Breast epithelium (tissue), 4 donors: ENCODE measurements at regions of chr14 and their contacts with region 1.

Region 1: GRCh38 chr14:80850197-80850814 is 91.2 kb downstream of the CEP128 start:
- DNase-seq: no peak
- H3K4me3 ChIP-seq: no peak overlapping the region
- H3K27ac ChIP-seq: no peak overlapping the region
- H3K4me1 ChIP-seq: no peaks in the 10 kb centered on the region
- H3K27me3 ChIP-seq: no peaks in the 10 kb centered on the region
- CTCF ChIP-seq: peak; percentile 48 to 59 (median 54)
- POLR2A ChIP-seq: no peak

Region 2: DNA sequence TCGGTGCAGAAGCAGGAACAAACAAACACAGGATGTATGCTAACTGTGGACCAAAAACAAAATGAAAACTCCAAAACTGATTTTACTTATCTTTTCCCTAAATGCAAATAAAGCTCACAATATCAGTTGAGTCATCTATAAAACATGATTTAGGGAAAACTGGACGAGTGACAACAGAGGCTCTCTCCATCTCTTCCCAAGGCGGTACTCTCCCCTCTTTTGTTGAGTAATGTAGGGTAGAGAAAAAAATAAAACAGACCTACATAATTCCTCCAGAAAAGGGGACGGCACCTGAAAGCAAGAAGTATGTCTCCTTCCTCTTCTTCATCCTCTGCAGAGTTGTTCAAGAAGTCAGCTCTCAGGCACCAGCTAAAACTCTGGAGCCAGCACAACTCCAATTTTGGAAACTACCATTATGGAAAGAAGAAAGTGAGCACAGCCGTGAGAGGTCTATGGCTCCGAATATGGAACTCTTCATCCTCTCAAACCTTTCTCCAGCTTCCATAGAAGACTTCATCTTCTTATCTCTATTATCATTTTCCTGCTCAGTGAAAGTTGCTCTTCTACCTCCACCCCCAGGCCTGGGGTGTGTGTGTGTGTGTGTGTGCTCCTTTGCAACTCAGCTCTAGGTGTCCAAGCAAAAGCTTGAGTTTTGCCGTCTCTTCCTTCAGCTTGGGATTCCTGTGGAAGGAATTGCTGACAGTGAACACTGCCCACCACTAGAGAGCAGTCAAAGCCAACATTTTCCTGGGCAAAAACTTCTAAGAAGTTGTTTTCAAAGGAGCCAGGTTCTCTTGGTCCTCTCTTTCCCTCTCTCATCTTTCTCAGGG is 794.4 kb before region 1 on chr14:
- intact Hi-C with region 1: loop called (anchors 5 kb)
- DNase-seq: peak in 1 of 2 donors; percentile 20
- H3K4me3 ChIP-seq: no peak overlapping the region
- H3K27ac ChIP-seq: no peak overlapping the region
- H3K4me1 ChIP-seq: no peaks in the 10 kb centered on the region
- H3K27me3 ChIP-seq: no peaks in the 10 kb centered on the region
- CTCF ChIP-seq: peak; percentile 35 to 67 (median 66)
- POLR2A ChIP-seq: no peak